CD8-positive, alpha-beta T cell (primary cell): ENCODE measurements at regions of chr15 and their contacts with region 1.

Region 1: GRCh38 chr15:63195569-63196015 is 6.2 kb downstream of the RAB8B start:
- DNase-seq: no peak
- ATAC-seq: no peak
- H3K4me3 ChIP-seq: no peak overlapping the region
- H3K4me3 Mint-ChIP-seq: peak overlapping the region; percentile 67
- H3K27ac ChIP-seq: peak overlapping the region in 1 of 2 experiments; percentile 98
- H3K27ac Mint-ChIP-seq: peak overlapping the region; percentile 92
- H3K4me1 ChIP-seq: peaks cover 91% of the 10 kb centered on the region
- H3K4me1 Mint-ChIP-seq: peaks cover 93% of the 10 kb centered on the region
- H3K27me3 ChIP-seq: no peaks in the 10 kb centered on the region
- H3K27me3 Mint-ChIP-seq: no peaks in the 10 kb centered on the region
- CTCF ChIP-seq: no peak

Region 2: DNA sequence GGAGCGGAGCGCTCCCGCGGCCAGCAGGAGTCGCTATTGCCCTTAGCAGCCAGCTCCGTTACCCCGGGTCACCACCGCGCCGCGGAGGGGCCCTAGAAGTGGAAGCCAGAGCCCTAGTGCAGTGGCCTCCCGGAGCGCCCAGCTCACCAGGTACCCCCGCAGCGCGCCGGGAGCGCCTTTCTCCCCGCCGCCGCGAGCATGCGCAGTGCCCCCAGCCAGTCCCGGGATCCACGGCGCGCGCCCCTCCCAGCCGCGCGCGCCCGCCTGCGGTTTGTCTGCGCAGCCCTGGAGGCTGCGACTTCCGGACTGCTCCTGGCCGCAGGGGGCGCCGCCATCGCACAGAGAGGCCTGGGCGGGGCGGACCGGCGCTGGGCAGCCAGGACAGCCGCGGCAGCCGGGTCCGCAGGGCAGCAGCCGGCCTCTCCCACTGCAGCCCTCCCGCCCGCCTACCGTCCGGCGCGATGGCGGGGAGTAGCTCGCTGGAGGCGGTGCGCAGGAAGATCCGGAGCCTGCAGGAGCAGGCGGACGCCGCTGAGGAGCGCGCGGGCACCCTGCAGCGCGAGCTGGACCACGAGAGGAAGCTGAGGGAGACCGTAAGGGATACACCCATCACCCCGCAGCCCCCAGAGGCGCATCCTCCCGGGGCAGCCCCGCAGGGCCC is 147.3 kb before region 1 on chr15:
- CTCF ChIA-PET with region 1: interaction called, 3 read pairs
- POLR2A ChIA-PET with region 1: no interaction called
- intact Hi-C with region 1: loop called in 1 of 2 experiments (anchors 1 kb)
- DNase-seq: peak; percentile 65 to 92 (median 85)
- ATAC-seq: peak; percentile 77
- H3K4me3 ChIP-seq: peak overlapping the region; percentile 62 to 72
- H3K4me3 Mint-ChIP-seq: peak overlapping the region; percentile 88
- H3K27ac ChIP-seq: peak overlapping the region in 1 of 2 experiments; percentile 47
- H3K27ac Mint-ChIP-seq: peak overlapping the region; percentile 74
- H3K4me1 ChIP-seq: peaks cover 21% of the 10 kb centered on the region
- H3K4me1 Mint-ChIP-seq: peaks cover 21% of the 10 kb centered on the region
- H3K27me3 ChIP-seq: peaks cover 14 to 25% of the 10 kb centered on the region in 2 experiments
- H3K27me3 Mint-ChIP-seq: peaks cover 32% of the 10 kb centered on the region
- CTCF ChIP-seq: peak; percentile 80

Region 3: GRCh38 chr15:63157118-63157843 is 38.3 kb before region 1 on chr15 and contains the start of gene RPS27L:
- CTCF ChIA-PET with region 1: interaction called, 9 read pairs
- POLR2A ChIA-PET with region 1: interaction called, 21 read pairs
- intact Hi-C with region 1: loop called in 1 of 2 experiments (anchors 2 kb)
- DNase-seq: peak; percentile 65 to 91 (median 88)
- ATAC-seq: peak; percentile 96
- H3K4me3 ChIP-seq: peak within 1 kb of the TSS; percentile 94 to 96
- H3K4me3 Mint-ChIP-seq: peak within 1 kb of the TSS; percentile 100
- H3K27ac ChIP-seq: peak within 1 kb of the TSS; percentile 75 to 78
- H3K27ac Mint-ChIP-seq: peak within 1 kb of the TSS; percentile 97
- H3K4me1 ChIP-seq: peaks cover 18% of the 10 kb centered on the region
- H3K4me1 Mint-ChIP-seq: peaks cover 26% of the 10 kb centered on the region
- H3K27me3 ChIP-seq: no peaks in the 10 kb centered on the region
- H3K27me3 Mint-ChIP-seq: no peaks in the 10 kb centered on the region
- CTCF ChIP-seq: no peak
- total RNA-seq, gene RPS27L: 40.3 to 45.9 TPM

Region 4: GRCh38 chr15:63166219-63166618 is 29.4 kb before region 1 on chr15:
- CTCF ChIA-PET with region 1: interaction called, 13 read pairs
- POLR2A ChIA-PET with region 1: no interaction called
- intact Hi-C with region 1: no loop called
- DNase-seq: peak in 2 of 9 experiments; percentile 34 to 51
- ATAC-seq: no peak
- H3K4me3 ChIP-seq: no peak overlapping the region
- H3K4me3 Mint-ChIP-seq: no peak overlapping the region
- H3K27ac ChIP-seq: no peak overlapping the region
- H3K27ac Mint-ChIP-seq: no peak overlapping the region
- H3K4me1 ChIP-seq: no peaks in the 10 kb centered on the region
- H3K4me1 Mint-ChIP-seq: peaks cover 4% of the 10 kb centered on the region
- H3K27me3 ChIP-seq: no peaks in the 10 kb centered on the region
- H3K27me3 Mint-ChIP-seq: no peaks in the 10 kb centered on the region
- CTCF ChIP-seq: no peak

Region 5: GRCh38 chr15:63212050-63213004 is 16.7 kb after region 1 on chr15:
- CTCF ChIA-PET with region 1: interaction called, 8 read pairs
- POLR2A ChIA-PET with region 1: interaction called, 15 read pairs
- intact Hi-C with region 1: loop called (anchors 2 kb)
- DNase-seq: peak in 1 of 9 experiments; percentile 56
- ATAC-seq: peak; percentile 45
- H3K4me3 ChIP-seq: no peak overlapping the region
- H3K4me3 Mint-ChIP-seq: peak overlapping the region; percentile 1
- H3K27ac ChIP-seq: peak overlapping the region in 1 of 2 experiments; percentile 63
- H3K27ac Mint-ChIP-seq: peak overlapping the region; percentile 82
- H3K4me1 ChIP-seq: peaks cover 49% of the 10 kb centered on the region
- H3K4me1 Mint-ChIP-seq: peaks cover 73% of the 10 kb centered on the region
- H3K27me3 ChIP-seq: no peaks in the 10 kb centered on the region
- H3K27me3 Mint-ChIP-seq: no peaks in the 10 kb centered on the region
- CTCF ChIP-seq: no peak

Region 6: DNA sequence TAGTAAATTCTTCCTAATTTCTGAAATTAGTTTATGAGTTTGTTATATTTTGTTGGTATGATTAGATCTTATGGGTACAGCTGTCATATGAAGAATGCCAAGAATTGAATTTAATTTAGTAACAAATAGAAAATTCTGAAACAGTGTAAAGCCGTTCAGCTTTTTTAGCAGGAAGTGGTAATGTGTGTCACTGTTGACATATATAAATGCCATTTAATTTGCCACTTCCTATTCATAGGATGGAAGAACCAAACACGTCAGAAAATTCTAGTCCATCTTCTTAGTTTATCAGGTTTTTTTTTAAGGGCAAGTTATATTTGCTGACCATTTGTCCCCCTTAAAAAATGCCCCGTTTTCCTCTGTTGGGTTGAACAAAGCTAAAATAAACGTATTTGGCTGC is 36.8 kb after region 1 on chr15:
- CTCF ChIA-PET with region 1: interaction called, 4 read pairs
- POLR2A ChIA-PET with region 1: interaction called, 26 read pairs
- intact Hi-C with region 1: loop called in 1 of 2 experiments (anchors 2 kb)
- DNase-seq: peak in 2 of 9 experiments; percentile 37 to 70
- ATAC-seq: peak; percentile 82
- H3K4me3 ChIP-seq: no peak overlapping the region
- H3K4me3 Mint-ChIP-seq: peak overlapping the region; percentile 53
- H3K27ac ChIP-seq: peak overlapping the region in 1 of 2 experiments; percentile 80
- H3K27ac Mint-ChIP-seq: peak overlapping the region; percentile 87
- H3K4me1 ChIP-seq: peaks cover 32% of the 10 kb centered on the region
- H3K4me1 Mint-ChIP-seq: peaks cover 74% of the 10 kb centered on the region
- H3K27me3 ChIP-seq: no peaks in the 10 kb centered on the region
- H3K27me3 Mint-ChIP-seq: no peaks in the 10 kb centered on the region
- CTCF ChIP-seq: no peak

Region 7: DNA sequence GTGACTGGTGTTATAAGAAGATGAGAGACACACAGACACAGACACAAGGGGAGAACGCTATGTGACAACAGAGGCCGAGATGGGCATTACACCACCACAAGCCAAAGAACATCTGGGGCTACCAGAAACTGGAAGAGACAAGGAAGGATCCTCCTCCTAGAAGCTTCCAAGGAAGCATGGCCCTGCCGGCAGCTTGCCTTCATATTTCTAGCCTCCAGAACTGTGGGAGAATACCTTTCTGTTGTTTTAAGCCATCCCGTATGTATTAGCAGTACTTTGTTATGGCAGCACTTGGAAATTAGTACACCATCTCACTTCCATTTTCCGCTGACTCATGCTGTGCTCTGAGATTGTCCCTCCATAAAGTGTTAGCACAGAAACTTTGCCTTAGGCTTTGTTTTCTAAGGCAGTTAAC is 224.7 kb after region 1 on chr15:
- CTCF ChIA-PET with region 1: no interaction called
- POLR2A ChIA-PET with region 1: no interaction called
- intact Hi-C with region 1: no loop called
- DNase-seq: no peak
- ATAC-seq: no peak
- H3K4me3 ChIP-seq: no peak overlapping the region
- H3K4me3 Mint-ChIP-seq: no peak overlapping the region
- H3K27ac ChIP-seq: no peak overlapping the region
- H3K27ac Mint-ChIP-seq: no peak overlapping the region
- H3K4me1 ChIP-seq: no peaks in the 10 kb centered on the region
- H3K4me1 Mint-ChIP-seq: no peaks in the 10 kb centered on the region
- H3K27me3 ChIP-seq: no peaks in the 10 kb centered on the region
- H3K27me3 Mint-ChIP-seq: no peaks in the 10 kb centered on the region
- CTCF ChIP-seq: no peak